GM12878 (cell line): ENCODE measurements at regions of chr3 and their contacts with region 1.

Region 1: DNA sequence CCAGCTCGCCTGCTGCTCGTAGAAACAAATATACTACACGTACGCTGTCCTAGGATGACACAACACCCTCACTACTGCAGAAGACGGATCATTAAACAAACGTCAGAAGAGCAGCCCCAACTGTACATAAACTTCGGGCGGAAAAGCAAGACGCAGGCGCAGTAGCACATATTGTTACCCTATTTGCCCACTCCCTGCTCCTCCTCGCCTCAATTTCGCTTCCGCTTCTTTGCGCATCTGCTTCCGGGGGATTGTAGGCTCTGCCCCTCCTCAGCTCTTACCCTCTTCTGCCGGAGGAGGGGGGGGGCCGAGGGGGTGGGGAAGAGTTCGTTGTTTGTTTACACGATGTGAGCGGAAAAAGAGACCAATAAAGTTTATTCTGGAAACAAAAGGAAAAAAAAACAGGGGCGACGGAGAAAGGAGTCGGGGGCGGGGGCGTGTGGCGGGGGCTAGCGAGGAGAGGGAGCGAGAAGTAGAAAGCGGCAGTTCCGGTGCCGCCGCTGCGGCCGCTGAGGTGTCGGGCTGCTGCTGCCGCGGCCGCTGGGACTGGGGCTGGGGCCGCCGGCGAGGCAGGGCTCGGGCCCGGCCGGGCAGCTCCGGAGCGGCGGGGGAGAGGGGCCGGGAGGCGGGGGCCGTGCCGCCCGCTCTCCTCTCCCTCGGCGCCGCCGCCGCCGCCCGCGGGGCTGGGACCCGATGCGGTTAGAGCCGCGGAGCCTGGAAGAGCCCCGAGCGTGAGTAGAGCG is at the start of gene PIK3CA:
- DNase-seq: peak; percentile 96
- ATAC-seq: peak; percentile 83
- H3K4me3 ChIP-seq: peak within 1 kb of the TSS; percentile 82
- H3K27ac ChIP-seq: peak within 1 kb of the TSS; percentile 88
- H3K4me1 ChIP-seq: peaks cover 5% of the 10 kb centered on the region; the same call in 1 of the 2 replicates
- H3K27me3 ChIP-seq: no peaks in the 10 kb centered on the region
- CTCF ChIP-seq: no peak
- EP300 ChIP-seq: peak in 1 of 2 experiments; percentile 2; a peak in 1 of 4 replicates
- POLR2A ChIP-seq: peak; percentile 76
- RAD21 ChIP-seq: no peak
- polyA plus RNA-seq, gene PIK3CA: 3.0 to 4.1 TPM

Region 2: GRCh38 chr3:179046497-179047353 is 101.3 kb before region 1 on chr3:
- CTCF ChIA-PET with region 1: interaction called, 4 read pairs
- POLR2A ChIA-PET with region 1: interaction called, 3 read pairs
- RAD21 ChIA-PET with region 1: interaction called, 11 read pairs
- SMC1A ChIA-PET with region 1: interaction called, 8 read pairs
- in situ Hi-C with region 1: no loop called
- intact Hi-C with region 1: loop called (anchors 1 kb)
- DNase-seq: peak; percentile 89
- ATAC-seq: peak; percentile 86
- H3K4me3 ChIP-seq: peak overlapping the region; percentile 10; the same call in 1 of the 2 replicates
- H3K27ac ChIP-seq: peak overlapping the region; percentile 84
- H3K4me1 ChIP-seq: peaks cover 22% of the 10 kb centered on the region
- H3K27me3 ChIP-seq: no peaks in the 10 kb centered on the region
- CTCF ChIP-seq: peak; percentile 8 to 30 (median 24); a peak in 1 of 6 replicates
- EP300 ChIP-seq: peak in 1 of 2 experiments; percentile 75; a peak in 2 of 4 replicates
- POLR2A ChIP-seq: peak; percentile 40
- RAD21 ChIP-seq: no peak

Region 3: GRCh38 chr3:179158336-179159039 is 10.4 kb after region 1 on chr3:
- CTCF ChIA-PET with region 1: interaction called, 4 read pairs
- POLR2A ChIA-PET with region 1: no interaction called
- RAD21 ChIA-PET with region 1: no interaction called
- SMC1A ChIA-PET with region 1: interaction called, 13 read pairs
- in situ Hi-C with region 1: no loop called
- intact Hi-C with region 1: no loop called
- DNase-seq: no peak
- ATAC-seq: peak; percentile 92
- H3K4me3 ChIP-seq: no peak overlapping the region
- H3K27ac ChIP-seq: no peak overlapping the region
- H3K4me1 ChIP-seq: peaks cover 8% of the 10 kb centered on the region; the same call in 1 of the 2 replicates
- H3K27me3 ChIP-seq: no peaks in the 10 kb centered on the region
- CTCF ChIP-seq: no peak
- EP300 ChIP-seq: no peak
- POLR2A ChIP-seq: no peak
- RAD21 ChIP-seq: no peak

Region 4: GRCh38 chr3:179196098-179196497 is 48.1 kb after region 1 on chr3:
- CTCF ChIA-PET with region 1: interaction called, 3 read pairs
- POLR2A ChIA-PET with region 1: no interaction called
- RAD21 ChIA-PET with region 1: interaction called, 3 read pairs
- SMC1A ChIA-PET with region 1: interaction called, 3 read pairs
- in situ Hi-C with region 1: no loop called
- intact Hi-C with region 1: loop called (anchors 2 kb)
- DNase-seq: peak; percentile 24
- ATAC-seq: peak; percentile 88
- H3K4me3 ChIP-seq: no peak overlapping the region
- H3K27ac ChIP-seq: no peak overlapping the region
- H3K4me1 ChIP-seq: peaks cover 7% of the 10 kb centered on the region
- H3K27me3 ChIP-seq: no peaks in the 10 kb centered on the region
- CTCF ChIP-seq: no peak
- EP300 ChIP-seq: peak in 1 of 2 experiments; percentile 61; a peak in 1 of 4 replicates
- POLR2A ChIP-seq: no peak
- RAD21 ChIP-seq: no peak

Region 5: GRCh38 chr3:179260949-179261765 is 113.1 kb after region 1 on chr3:
- CTCF ChIA-PET with region 1: interaction called, 4 read pairs
- POLR2A ChIA-PET with region 1: interaction called, 4 read pairs
- RAD21 ChIA-PET with region 1: interaction called, 3 read pairs
- SMC1A ChIA-PET with region 1: interaction called, 3 read pairs
- in situ Hi-C with region 1: no loop called
- intact Hi-C with region 1: loop called (anchors 5 kb)
- DNase-seq: no peak
- ATAC-seq: peak; percentile 96
- H3K4me3 ChIP-seq: peak overlapping the region; percentile 88
- H3K27ac ChIP-seq: peak overlapping the region; percentile 18
- H3K4me1 ChIP-seq: peaks cover 4% of the 10 kb centered on the region; the same call in 1 of the 2 replicates
- H3K27me3 ChIP-seq: no peaks in the 10 kb centered on the region
- CTCF ChIP-seq: no peak
- EP300 ChIP-seq: no peak
- POLR2A ChIP-seq: peak; percentile 84
- RAD21 ChIP-seq: no peak